CD8-positive, alpha-beta memory T cell (primary cell): ENCODE measurements at regions of chr19 and their contacts with region 1.

Region 1: GRCh38 chr19:47013041-47013517 is 6.6 kb upstream of the NPAS1 start:
- DNase-seq: peak; percentile 45 to 69 (median 57)
- H3K4me3 ChIP-seq: no peak overlapping the region
- H3K4me3 Mint-ChIP-seq: peak overlapping the region in 3 of 7 donors; percentile 36 to 54 (median 37)
- H3K27ac ChIP-seq: no peak overlapping the region
- H3K27ac Mint-ChIP-seq: peak overlapping the region in 4 of 8 donors; percentile 5 to 94 (median 20)
- H3K4me1 ChIP-seq: peaks cover 8% of the 10 kb centered on the region
- H3K4me1 Mint-ChIP-seq: peaks cover 9 to 11% (median 10%) of the 10 kb centered on the region in 3 donors
- H3K27me3 ChIP-seq: peaks cover 5% of the 10 kb centered on the region
- H3K27me3 Mint-ChIP-seq: peaks cover 4 to 17% of the 10 kb centered on the region in 2 donors

Region 2: GRCh38 chr19:46990991-46991676 is 21.9 kb before region 1 on chr19:
- CTCF ChIA-PET with region 1: interaction called, 18 read pairs
- POLR2A ChIA-PET with region 1: no interaction called
- DNase-seq: peak; percentile 30 to 75 (median 46)
- H3K4me3 ChIP-seq: no peak overlapping the region
- H3K4me3 Mint-ChIP-seq: peak overlapping the region in 3 of 7 donors; percentile 19 to 56 (median 38)
- H3K27ac ChIP-seq: no peak overlapping the region
- H3K27ac Mint-ChIP-seq: peak overlapping the region in 6 of 8 donors; percentile 1 to 82 (median 67)
- H3K4me1 ChIP-seq: peaks cover 9% of the 10 kb centered on the region
- H3K4me1 Mint-ChIP-seq: peaks cover 23 to 27% (median 26%) of the 10 kb centered on the region in 3 donors
- H3K27me3 ChIP-seq: no peaks in the 10 kb centered on the region
- H3K27me3 Mint-ChIP-seq: no peaks in the 10 kb centered on the region

Region 3: DNA sequence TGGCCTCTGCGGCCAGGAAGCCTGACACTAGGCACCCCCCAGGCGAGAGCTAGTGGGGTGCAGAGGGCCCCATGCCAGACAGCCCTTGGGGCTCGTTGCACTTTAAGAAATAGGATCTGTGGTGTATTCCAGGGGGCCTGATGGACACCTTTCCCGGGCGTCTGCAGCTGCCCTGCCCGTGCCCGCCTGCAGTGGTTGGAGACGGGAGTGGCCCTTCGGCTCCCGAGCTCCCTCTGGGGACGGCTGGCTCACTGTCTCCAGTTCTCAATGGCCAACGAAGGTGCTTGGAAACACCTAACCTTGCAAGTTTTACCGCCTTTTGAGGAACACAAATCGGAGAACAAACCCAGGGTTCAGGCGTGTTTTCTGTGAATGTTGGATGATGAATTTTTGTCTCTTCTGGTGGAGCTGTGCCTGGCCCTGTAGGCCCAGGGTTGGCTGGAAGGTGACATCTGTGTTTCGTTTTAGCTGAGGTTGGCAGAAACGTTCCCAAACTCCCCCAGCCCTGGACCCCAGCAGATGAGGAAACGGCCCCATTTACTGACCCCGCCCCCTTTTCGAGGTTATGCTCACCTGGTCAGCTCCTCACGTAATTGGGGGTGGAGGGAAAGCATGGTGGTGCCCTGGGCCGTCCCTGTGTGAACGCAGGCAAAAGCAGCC is 10.8 kb before region 1 on chr19:
- CTCF ChIA-PET with region 1: interaction called, 12 read pairs
- POLR2A ChIA-PET with region 1: no interaction called
- DNase-seq: no peak
- H3K4me3 ChIP-seq: no peak overlapping the region
- H3K4me3 Mint-ChIP-seq: no peak overlapping the region
- H3K27ac ChIP-seq: no peak overlapping the region
- H3K27ac Mint-ChIP-seq: no peak overlapping the region
- H3K4me1 ChIP-seq: no peaks in the 10 kb centered on the region
- H3K4me1 Mint-ChIP-seq: peaks cover 15 to 28% (median 26%) of the 10 kb centered on the region in 3 donors
- H3K27me3 ChIP-seq: no peaks in the 10 kb centered on the region
- H3K27me3 Mint-ChIP-seq: peaks cover 0 to 3% of the 10 kb centered on the region in 2 donors

Region 4: GRCh38 chr19:47035127-47036096 is 22.3 kb after region 1 on chr19:
- CTCF ChIA-PET with region 1: interaction called, 35 read pairs
- POLR2A ChIA-PET with region 1: no interaction called
- DNase-seq: peak; percentile 89 to 98 (median 94)
- H3K4me3 ChIP-seq: peak overlapping the region; percentile 69
- H3K4me3 Mint-ChIP-seq: peak overlapping the region; percentile 84 to 96 (median 91)
- H3K27ac ChIP-seq: peak overlapping the region; percentile 48
- H3K27ac Mint-ChIP-seq: peak overlapping the region; percentile 74 to 90 (median 82)
- H3K4me1 ChIP-seq: peaks cover 14% of the 10 kb centered on the region
- H3K4me1 Mint-ChIP-seq: peaks cover 16 to 24% (median 20%) of the 10 kb centered on the region in 3 donors
- H3K27me3 ChIP-seq: no peaks in the 10 kb centered on the region
- H3K27me3 Mint-ChIP-seq: peaks cover 12 to 18% of the 10 kb centered on the region in 2 donors

Region 5: GRCh38 chr19:47106821-47107201 is 93.7 kb after region 1 on chr19:
- CTCF ChIA-PET with region 1: no interaction called
- POLR2A ChIA-PET with region 1: no interaction called
- DNase-seq: no peak
- H3K4me3 ChIP-seq: peak overlapping the region; percentile 8
- H3K4me3 Mint-ChIP-seq: peak overlapping the region; percentile 54 to 100 (median 85)
- H3K27ac ChIP-seq: peak overlapping the region; percentile 51
- H3K27ac Mint-ChIP-seq: peak overlapping the region; percentile 88 to 99 (median 93)
- H3K4me1 ChIP-seq: peaks cover 59% of the 10 kb centered on the region
- H3K4me1 Mint-ChIP-seq: peaks cover 60 to 79% (median 77%) of the 10 kb centered on the region in 3 donors
- H3K27me3 ChIP-seq: no peaks in the 10 kb centered on the region
- H3K27me3 Mint-ChIP-seq: no peaks in the 10 kb centered on the region

Region 6: GRCh38 chr19:47124937-47125668 is 112.0 kb after region 1 on chr19:
- CTCF ChIA-PET with region 1: interaction called, 11 read pairs
- POLR2A ChIA-PET with region 1: no interaction called
- DNase-seq: peak in 2 of 5 donors; percentile 39 to 52
- H3K4me3 ChIP-seq: no peak overlapping the region
- H3K4me3 Mint-ChIP-seq: peak overlapping the region in 1 of 7 donors; percentile 72
- H3K27ac ChIP-seq: no peak overlapping the region
- H3K27ac Mint-ChIP-seq: peak overlapping the region in 2 of 8 donors; percentile 26 to 57
- H3K4me1 ChIP-seq: no peaks in the 10 kb centered on the region
- H3K4me1 Mint-ChIP-seq: peaks cover 0 to 6% (median 6%) of the 10 kb centered on the region in 3 donors
- H3K27me3 ChIP-seq: no peaks in the 10 kb centered on the region
- H3K27me3 Mint-ChIP-seq: no peaks in the 10 kb centered on the region